K562 (cell line): ENCODE measurements at regions of chr20 and their contacts with region 1.

Region 1: GRCh38 chr20:45934586-45935415 is at the start of gene PCIF1:
- DNase-seq: peak; percentile 97 to 99 (median 98)
- ATAC-seq: peak; percentile 90
- H3K4me3 ChIP-seq: peak within 1 kb of the TSS; percentile 99
- H3K27ac ChIP-seq: peak within 1 kb of the TSS; percentile 100
- H3K4me1 ChIP-seq: peaks cover 12 to 28% of the 10 kb centered on the region in 2 experiments; a peak in 4 of 5 replicates
- H3K27me3 ChIP-seq: no peaks in the 10 kb centered on the region
- CTCF ChIP-seq: peak in 1 of 3 experiments; percentile 25; a peak in 1 of 6 replicates
- EP300 ChIP-seq: no peak
- POLR2A ChIP-seq: peak; percentile 99
- RAD21 ChIP-seq: no peak; a peak in 1 of 4 replicates
- polyA plus RNA-seq, gene PCIF1: 5.8 to 12.9 TPM

Region 2: DNA sequence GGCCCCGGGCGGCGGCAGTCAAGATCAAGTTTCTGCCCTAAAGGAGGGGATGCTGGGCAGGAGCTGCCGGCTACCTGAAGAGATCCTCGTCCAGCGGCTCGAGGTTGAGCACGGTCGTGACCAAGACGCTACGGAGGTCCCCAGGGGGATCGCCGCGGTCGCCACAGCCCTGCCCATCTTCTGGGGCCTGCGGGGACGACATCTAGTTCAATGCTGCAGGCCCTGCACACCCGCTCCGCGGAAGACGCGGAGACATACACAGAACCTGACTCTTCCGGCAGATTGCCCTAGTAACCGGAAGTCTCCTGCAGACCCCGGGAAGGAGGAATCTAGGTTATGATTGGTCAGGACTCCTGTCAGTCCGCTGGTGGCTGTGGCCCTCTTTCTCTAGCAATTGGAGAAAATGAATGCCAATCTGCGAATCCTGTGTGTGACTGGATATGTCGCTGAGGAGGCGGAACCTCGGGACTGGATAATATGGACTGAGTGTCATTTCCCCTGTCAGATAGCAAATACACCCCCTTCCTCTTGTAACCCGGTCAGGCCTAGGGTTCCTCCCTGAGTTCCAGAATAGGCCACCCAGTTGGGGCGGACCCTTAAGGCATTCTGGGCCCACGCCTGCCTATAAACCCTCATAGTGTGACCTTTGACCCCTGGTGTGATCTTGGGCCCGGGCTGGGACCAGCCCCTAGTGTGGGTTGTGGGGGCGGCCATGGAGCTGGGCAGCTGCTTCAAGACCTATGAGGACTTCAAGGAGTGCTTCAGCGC is 77.5 kb before region 1 on chr20 and contains the starts of genes ACOT8 and ZSWIM3:
- CTCF ChIA-PET with region 1: no interaction called
- POLR2A ChIA-PET with region 1: no interaction called
- in situ Hi-C with region 1: no loop called
- intact Hi-C with region 1: loop called (anchors 2 kb)
- DNase-seq: peak; percentile 99 to 100 (median 100)
- ATAC-seq: peak; percentile 97
- H3K4me3 ChIP-seq: peak within 1 kb of the TSS; percentile 72
- H3K27ac ChIP-seq: peak within 1 kb of the TSS; percentile 88
- H3K4me1 ChIP-seq: peaks cover 21 to 28% of the 10 kb centered on the region in 2 experiments
- H3K27me3 ChIP-seq: no peaks in the 10 kb centered on the region
- CTCF ChIP-seq: peak in 1 of 3 experiments; percentile 12; a peak in 1 of 6 replicates
- EP300 ChIP-seq: no peak
- POLR2A ChIP-seq: peak; percentile 84
- RAD21 ChIP-seq: no peak
- polyA plus RNA-seq, gene ACOT8: 8.2 to 14.9 TPM
- polyA plus RNA-seq, gene ZSWIM3: 1.7 to 1.8 TPM

Region 3: GRCh38 chr20:45924391-45925261 is 10.2 kb before region 1 on chr20:
- CTCF ChIA-PET with region 1: no interaction called
- POLR2A ChIA-PET with region 1: interaction called, 91 read pairs
- in situ Hi-C with region 1: no loop called
- intact Hi-C with region 1: no loop called
- DNase-seq: no peak
- ATAC-seq: no peak
- H3K4me3 ChIP-seq: no peak overlapping the region
- H3K27ac ChIP-seq: no peak overlapping the region
- H3K4me1 ChIP-seq: peaks cover 6 to 10% of the 10 kb centered on the region in 2 experiments; a peak in 4 of 5 replicates
- H3K27me3 ChIP-seq: no peaks in the 10 kb centered on the region; a peak in 1 of 5 replicates
- CTCF ChIP-seq: no peak
- EP300 ChIP-seq: no peak
- POLR2A ChIP-seq: no peak
- RAD21 ChIP-seq: no peak

Region 4: DNA sequence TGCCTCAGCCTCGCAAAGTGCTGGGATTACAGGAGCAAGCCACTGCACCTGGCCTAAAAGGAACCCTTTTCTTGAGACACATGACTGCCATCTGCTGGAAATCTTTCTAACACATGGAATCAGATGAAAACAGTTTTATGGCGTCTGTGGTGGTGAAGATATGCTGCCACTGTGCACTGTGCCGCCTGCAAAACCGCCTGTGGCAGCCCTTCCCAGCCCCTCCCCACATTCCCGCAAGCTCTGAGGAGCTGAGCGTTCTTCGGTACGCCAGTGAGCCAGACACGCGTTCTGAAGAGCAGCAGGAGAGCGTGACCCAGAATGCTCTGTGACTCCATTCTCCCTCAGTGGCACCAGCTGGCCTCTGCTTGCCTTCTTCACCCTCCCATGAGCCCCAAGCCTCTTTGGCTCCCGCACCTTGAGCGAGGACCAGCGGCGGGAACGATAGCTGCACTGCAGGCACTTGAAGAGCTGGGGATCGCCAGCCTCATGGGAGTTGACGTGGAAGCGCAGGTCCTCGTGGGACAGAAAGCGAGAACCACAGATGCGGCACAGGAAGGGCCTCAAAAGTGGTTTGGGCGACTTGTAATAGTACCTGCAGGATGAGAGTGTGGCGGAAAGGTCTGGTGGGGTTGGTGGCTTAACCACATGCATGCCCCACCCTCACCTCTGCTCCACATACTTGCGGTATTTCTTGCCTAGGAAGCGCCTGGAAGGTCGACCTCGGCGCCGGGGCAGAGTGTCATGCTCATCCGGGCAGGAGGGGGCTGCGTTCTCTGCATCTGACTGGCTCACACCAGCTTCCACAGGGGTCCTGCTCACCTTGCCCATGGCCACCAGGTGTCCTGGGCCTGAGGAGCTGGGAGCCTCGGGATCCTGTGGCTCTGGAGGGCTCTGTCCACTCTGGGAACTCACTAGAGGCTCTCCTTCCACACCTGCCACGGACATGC is 28.5 kb after region 1 on chr20:
- CTCF ChIA-PET with region 1: interaction called, 10 read pairs
- POLR2A ChIA-PET with region 1: interaction called, 7 read pairs
- in situ Hi-C with region 1: no loop called
- intact Hi-C with region 1: no loop called
- DNase-seq: peak in 3 of 4 experiments; percentile 15 to 64 (median 33)
- ATAC-seq: peak; percentile 86
- H3K4me3 ChIP-seq: no peak overlapping the region
- H3K27ac ChIP-seq: no peak overlapping the region
- H3K4me1 ChIP-seq: peaks cover 0 to 16% of the 10 kb centered on the region in 2 experiments; a peak in 2 of 5 replicates
- H3K27me3 ChIP-seq: no peaks in the 10 kb centered on the region
- CTCF ChIP-seq: peak; percentile 43 to 66 (median 53); a peak in 5 of 6 replicates
- EP300 ChIP-seq: no peak
- POLR2A ChIP-seq: no peak
- RAD21 ChIP-seq: peak; percentile 69 to 80